ENCODE measurements at regions of chr6 and their contacts with region 1.

Region 1: DNA sequence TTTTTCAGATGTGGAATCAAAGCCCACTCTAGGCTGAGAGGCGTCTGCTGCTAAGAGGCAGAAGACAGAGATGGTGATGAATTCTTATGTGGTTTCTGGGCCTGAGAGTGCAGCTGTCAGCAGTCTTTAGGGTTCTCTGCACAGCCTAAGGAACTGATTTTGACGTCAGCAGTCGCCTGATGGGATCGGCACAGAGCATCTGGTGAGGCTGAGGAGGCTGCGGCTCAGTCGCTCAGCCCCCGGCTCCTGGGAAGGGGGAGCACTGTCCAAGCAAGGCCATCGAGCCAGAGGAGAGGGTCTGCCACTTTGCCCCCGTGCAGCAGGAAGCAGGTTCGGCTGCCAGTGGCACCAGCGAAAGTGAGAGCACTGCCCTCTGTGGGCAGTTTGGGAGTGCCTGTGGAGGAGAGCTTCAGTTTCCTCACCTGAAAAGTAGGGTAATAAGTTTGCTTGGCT is 92.5 kb downstream of the TCP11 start:
- DNase-seq: peak; percentile 44 to 58 (median 55)
- H3K4me3 ChIP-seq: peak overlapping the region; percentile 30 to 73 (median 50)
- H3K4me3 Mint-ChIP-seq: no peak overlapping the region
- H3K27ac ChIP-seq: peak overlapping the region; percentile 60 to 87
- H3K27ac Mint-ChIP-seq: no peak overlapping the region
- H3K4me1 ChIP-seq: peaks cover 56 to 78% of the 10 kb centered on the region in 2 donors
- H3K4me1 Mint-ChIP-seq: peaks cover 32% of the 10 kb centered on the region
- H3K27me3 ChIP-seq: no peaks in the 10 kb centered on the region
- H3K27me3 Mint-ChIP-seq: peaks cover 0 to 2% (median 0%) of the 10 kb centered on the region in 3 donors
- CTCF ChIP-seq: peak; percentile 56

Region 2: DNA sequence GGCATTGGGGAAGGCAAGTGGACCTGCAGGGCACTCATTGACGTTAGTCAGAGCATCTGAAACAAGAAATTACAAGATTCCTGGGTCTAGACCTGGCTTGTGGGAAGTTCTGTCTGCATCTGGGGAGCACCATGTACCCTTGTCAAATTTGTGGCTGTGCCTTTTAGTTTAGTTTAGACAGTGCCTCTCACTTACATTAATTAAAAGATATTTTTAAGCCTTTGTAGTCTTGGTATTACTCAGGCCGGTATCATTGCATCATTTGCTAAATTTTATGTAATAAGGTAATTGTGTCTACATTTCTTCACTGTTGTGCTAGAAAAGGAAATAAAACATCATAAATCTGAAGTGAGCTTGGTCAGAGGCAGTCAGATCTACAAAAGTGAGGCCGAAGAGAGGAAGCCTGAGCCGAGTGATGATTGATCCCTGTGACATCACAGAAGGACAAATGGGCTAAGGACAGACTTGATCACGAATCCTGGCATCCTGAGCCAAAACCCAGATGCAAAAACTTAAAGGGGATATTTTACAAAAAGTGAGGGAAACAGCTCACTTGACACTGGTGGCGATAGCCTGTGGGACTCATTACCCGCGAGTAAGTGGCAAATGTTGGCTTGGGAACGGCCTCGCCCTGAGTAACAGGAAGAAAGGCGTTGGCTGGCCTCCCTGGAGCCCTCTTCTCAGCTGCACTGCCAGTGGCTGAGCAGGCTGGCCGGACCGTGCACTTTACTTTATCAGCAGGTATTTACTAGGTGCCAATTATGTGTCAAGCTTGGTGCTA is 14.1 kb before region 1 on chr6:
- intact Hi-C with region 1: loop called in 1 of 2 experiments (anchors 2 kb)
- DNase-seq: peak; percentile 85 to 92 (median 88)
- H3K4me3 ChIP-seq: peak overlapping the region in 1 of 3 experiments; percentile 26
- H3K4me3 Mint-ChIP-seq: peak overlapping the region; percentile 51 to 74
- H3K27ac ChIP-seq: peak overlapping the region; percentile 82 to 88
- H3K27ac Mint-ChIP-seq: peak overlapping the region; percentile 92 to 98 (median 97)
- H3K4me1 ChIP-seq: peaks cover 26 to 32% of the 10 kb centered on the region in 2 donors
- H3K4me1 Mint-ChIP-seq: peaks cover 37% of the 10 kb centered on the region
- H3K27me3 ChIP-seq: no peaks in the 10 kb centered on the region
- H3K27me3 Mint-ChIP-seq: peaks cover 0 to 1% (median 0%) of the 10 kb centered on the region in 3 donors
- CTCF ChIP-seq: no peak